Activated naive CD4-positive, alpha-beta T cell treated with anti-CD3 and anti-CD28 coated beads for 36 hours (primary cell): ENCODE measurements at regions of chr12 and their contacts with region 1.

Region 1: DNA sequence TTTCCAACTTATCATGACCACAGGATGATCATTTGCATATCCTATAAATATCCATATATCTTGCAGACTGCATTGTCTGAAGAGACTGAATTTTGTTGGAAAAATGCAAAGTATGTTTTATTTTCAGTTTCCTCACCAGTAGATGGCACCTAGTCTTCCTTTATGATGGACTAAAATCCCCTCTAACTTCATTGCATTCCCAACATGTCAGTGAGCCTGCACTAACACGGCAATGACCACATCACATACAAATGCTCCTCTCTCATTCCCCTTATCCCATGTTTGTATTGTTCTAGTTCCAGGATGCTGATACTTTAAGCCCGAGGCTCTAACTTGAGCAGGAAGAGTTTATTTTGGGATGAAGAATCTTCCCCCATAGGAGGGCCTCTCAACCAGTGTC is 24.7 kb upstream of the MYBPC1 start:
- DNase-seq: no peak
- H3K4me3 Mint-ChIP-seq: no peak overlapping the region
- H3K27ac Mint-ChIP-seq: no peak overlapping the region
- H3K4me1 Mint-ChIP-seq: peaks cover 19% of the 10 kb centered on the region
- H3K27me3 Mint-ChIP-seq: peaks cover 5% of the 10 kb centered on the region

Region 2: DNA sequence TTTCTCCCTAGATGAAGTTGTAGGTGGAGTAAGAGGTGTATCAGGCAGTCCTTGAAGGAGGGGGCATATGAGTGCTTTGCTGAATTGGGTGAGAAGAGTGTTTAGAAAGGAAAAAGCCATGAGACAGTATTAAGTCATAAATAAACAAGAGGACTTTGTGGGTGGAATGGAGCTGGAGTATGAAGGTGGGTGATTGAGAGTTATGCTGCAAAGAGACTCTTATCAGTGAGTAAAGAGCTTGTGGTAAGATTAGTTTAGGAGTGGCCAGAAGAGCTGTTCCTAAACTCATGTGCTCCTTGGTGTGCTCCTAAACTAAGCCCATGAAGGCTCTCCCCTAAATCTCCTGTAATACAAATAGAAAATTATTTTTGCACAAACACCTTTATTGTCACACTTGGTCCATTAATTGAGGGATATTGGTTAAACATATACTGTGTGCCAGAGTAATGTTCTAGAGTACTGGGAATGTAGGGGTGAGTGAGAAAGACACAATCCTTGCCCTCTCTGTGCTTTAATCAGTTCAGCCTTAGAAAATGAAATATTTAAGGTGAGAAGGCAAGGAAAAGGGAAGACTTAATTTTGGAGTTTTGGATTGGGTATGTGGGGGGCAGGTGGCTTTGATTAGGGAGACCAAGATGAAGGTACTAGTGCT is 137.2 kb after region 1 on chr12:
- CTCF ChIA-PET with region 1: no interaction called
- intact Hi-C with region 1: no loop called
- DNase-seq: no peak
- H3K4me3 Mint-ChIP-seq: no peak overlapping the region
- H3K27ac Mint-ChIP-seq: no peak overlapping the region
- H3K4me1 Mint-ChIP-seq: peaks cover 20% of the 10 kb centered on the region
- H3K27me3 Mint-ChIP-seq: no peaks in the 10 kb centered on the region

Region 3: DNA sequence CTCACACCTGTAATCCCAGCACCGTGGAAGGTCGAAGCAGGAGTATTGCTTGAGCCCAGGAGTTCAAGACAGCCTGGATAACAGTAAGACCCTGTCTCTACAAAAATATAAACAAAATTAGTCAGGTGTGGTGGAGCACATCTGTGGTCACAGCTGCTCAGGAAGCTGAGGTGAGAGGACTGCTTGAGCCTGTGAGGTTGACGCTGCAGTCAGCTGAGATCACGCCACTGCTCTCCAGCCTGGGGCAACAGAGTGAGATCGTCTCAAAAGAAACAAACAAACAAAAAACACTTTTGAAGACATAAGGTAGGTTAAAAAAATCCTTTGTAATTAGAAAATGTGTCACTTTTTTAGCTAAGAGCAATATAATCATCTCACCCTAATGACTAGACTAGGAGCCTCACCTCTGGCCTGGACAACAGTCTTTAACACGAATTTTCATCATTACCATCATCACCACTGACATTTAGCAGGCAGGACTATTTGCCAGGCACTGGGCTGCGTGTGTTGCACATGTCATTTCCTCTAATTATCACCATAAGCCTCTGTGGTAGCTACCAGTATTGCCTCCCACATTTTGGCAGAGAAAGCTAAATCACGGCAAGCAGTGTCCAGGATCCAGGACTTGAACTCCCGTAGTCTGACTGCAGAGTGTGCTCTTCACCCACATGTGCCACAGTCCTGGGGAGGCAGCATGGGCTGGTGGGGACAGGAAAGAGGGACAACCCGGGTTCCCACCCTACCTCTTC is 173.9 kb after region 1 on chr12:
- CTCF ChIA-PET with region 1: no interaction called
- intact Hi-C with region 1: loop called (anchors 5 kb)
- DNase-seq: no peak
- H3K4me3 Mint-ChIP-seq: no peak overlapping the region
- H3K27ac Mint-ChIP-seq: no peak overlapping the region
- H3K4me1 Mint-ChIP-seq: no peaks in the 10 kb centered on the region
- H3K27me3 Mint-ChIP-seq: no peaks in the 10 kb centered on the region